PC-3 (cell line): ENCODE measurements at regions of chr5 and their contacts with region 1.

Region 1: DNA sequence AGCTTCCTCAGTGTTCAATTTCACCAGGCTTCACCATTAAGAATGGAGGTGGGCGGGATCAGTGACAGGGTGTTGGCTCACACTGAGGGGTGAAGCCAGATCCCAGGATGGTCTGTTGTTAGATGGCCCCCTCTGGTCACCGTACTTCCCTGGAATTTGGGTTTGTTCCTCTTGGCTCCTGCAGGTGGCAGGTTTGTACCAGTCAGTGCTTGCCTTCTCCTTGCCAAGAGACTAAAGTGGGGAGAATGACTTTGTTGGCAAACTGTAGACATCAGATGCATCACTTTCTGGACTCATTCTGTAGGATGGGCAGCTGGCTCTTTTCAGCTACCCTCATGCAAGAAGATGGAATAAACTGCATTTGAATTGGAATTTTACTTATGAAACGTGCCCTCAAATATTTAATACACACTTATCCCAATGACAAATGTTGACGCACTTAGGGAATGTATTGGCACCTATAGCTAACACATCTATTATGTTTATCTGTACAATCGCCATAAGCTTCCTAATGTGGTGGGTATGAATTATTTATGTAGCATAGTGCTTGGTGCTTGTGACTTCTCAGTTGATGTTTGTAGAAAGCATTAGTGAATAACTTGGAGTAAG is 31.4 kb upstream of the ANKRD55 start:
- DNase-seq: peak; percentile 66
- ATAC-seq: peak; percentile 75
- H3K4me3 ChIP-seq: 0 out of 2 replicates have a peak overlapping the region, but pooled peaks have one; percentile 29
- H3K27ac ChIP-seq: no peak overlapping the region
- H3K4me1 ChIP-seq: peaks cover under 1% of the 10 kb centered on the region; the same call in 1 of the 2 replicates
- H3K27me3 ChIP-seq: no peaks in the 10 kb centered on the region
- CTCF ChIP-seq: peak; percentile 79

Region 2: DNA sequence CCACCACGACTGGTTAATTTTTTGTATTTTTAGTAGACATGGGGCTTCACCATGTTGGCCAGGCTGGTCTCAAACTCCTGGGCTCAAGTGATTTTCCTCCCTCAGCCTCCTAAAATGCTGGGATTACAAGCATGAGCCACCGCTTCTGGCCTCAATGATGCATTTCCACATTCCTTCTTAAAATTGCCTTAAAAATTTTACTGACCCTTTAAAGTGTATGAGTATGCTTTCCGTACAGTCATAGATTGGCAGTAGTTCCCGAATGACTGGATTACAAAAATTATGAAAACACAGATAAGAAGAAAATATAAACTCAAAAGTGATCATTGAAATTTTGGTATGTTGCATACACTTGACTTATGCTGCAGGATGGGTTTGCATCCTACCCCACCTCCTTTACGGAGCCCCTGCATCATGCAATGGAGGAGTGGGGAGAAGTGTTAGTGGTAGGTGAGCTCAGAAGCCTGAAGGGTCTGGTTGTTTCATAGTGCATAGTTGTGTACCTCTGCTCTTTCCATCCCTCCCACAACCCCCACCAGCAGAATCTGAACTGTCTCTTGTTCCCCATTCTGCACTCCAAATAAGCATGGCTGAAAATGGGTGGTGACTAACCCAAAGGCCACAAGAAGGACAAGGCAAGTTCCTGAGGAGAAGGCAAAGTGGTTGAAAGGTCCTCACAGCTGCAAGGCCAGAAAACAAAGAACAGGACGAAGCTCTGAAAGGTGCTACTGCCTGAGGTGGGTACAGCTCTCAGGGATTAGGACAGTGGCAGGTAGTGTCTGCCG is 58.2 kb before region 1 on chr5:
- CTCF ChIA-PET with region 1: no interaction called
- POLR2A ChIA-PET with region 1: no interaction called
- intact Hi-C with region 1: loop called (anchors 5 kb)
- DNase-seq: peak; percentile 61
- ATAC-seq: peak; percentile 68
- H3K4me3 ChIP-seq: no peak overlapping the region
- H3K27ac ChIP-seq: no peak overlapping the region
- H3K4me1 ChIP-seq: peaks cover 23% of the 10 kb centered on the region; the same call in 1 of the 2 replicates
- H3K27me3 ChIP-seq: no peaks in the 10 kb centered on the region
- CTCF ChIP-seq: no peak